ENCODE measurements at regions of chr17 and their contacts with region 1.

Region 1: GRCh38 chr17:9291912-9292560 is 270.7 kb downstream of the NTN1 start:
- DNase-seq: peak; percentile 49
- ATAC-seq: peak; percentile 90

Region 2: GRCh38 chr17:8991514-8992285 is 300.3 kb before region 1 on chr17:
- intact Hi-C with region 1: loop called (anchors 5 kb)
- DNase-seq: no peak
- ATAC-seq: peak; percentile 64

Region 3: DNA sequence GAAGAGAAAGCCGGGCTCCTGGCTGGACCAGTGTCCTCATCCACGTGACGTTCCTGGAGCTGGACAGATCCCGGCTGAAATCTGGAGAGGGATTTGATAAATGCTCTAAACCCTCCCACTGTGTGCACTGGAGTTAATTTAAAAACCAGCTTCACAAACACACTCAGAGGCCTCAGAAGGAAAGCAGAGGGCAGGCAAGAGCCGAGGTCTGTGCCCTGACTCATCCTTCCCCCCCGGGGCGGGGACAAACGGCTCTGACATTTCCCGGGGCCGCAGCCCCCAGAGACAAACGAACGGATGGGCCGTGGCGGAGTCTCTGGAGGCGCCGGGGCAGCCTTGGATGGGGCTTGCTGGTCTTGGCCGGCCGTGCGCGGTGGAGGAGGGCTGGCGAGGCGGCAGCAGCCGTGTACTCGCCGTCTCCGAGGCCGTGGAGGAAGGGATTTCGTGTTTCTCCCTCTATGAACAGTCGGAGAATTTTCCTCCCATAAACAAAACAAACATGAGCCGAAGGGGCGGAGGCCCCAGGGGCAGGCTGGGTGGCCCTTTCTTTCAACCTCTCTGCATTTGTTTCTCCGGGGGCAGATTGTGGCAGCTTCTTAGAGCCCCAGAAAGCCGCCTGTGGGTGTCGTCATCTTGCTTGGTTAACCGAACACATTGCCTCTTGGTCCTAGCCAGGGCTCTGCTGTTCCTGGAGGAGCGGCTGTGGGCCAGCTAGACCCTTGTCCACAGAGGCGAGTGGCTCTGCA is 176.4 kb before region 1 on chr17:
- intact Hi-C with region 1: loop called (anchors 10 kb)
- DNase-seq: peak; percentile 75
- ATAC-seq: peak; percentile 85

Region 4: GRCh38 chr17:9402590-9403199 is 110.7 kb after region 1 on chr17:
- intact Hi-C with region 1: no loop called
- DNase-seq: no peak
- ATAC-seq: no peak

Measured in Right ventricle myocardium superior (tissue), 1 donor.